Activated naive CD4-positive, alpha-beta T cell treated with anti-CD3 and anti-CD28 coated beads for 36 hours (primary cell): ENCODE measurements at regions of chr5 and their contacts with region 1.

Region 1: GRCh38 chr5:111237470-111237869 is 13.3 kb downstream of the CAMK4 start:
- DNase-seq: no peak
- H3K4me3 Mint-ChIP-seq: peak overlapping the region; percentile 66
- H3K27ac Mint-ChIP-seq: peak overlapping the region; percentile 89
- H3K4me1 Mint-ChIP-seq: peaks cover 90% of the 10 kb centered on the region
- H3K27me3 Mint-ChIP-seq: no peaks in the 10 kb centered on the region

Region 2: GRCh38 chr5:111223889-111224563 is 13.4 kb before region 1 on chr5 and contains the start of gene CAMK4:
- CTCF ChIA-PET with region 1: interaction called, 6 read pairs
- intact Hi-C with region 1: loop called (anchors 1 kb)
- DNase-seq: peak; percentile 75
- H3K4me3 Mint-ChIP-seq: peak within 1 kb of the TSS; percentile 95
- H3K27ac Mint-ChIP-seq: peak within 1 kb of the TSS; percentile 97
- H3K4me1 Mint-ChIP-seq: peaks cover 25% of the 10 kb centered on the region
- H3K27me3 Mint-ChIP-seq: no peaks in the 10 kb centered on the region
- total RNA-seq, gene CAMK4: 40.6 to 44.4 TPM

Region 3: DNA sequence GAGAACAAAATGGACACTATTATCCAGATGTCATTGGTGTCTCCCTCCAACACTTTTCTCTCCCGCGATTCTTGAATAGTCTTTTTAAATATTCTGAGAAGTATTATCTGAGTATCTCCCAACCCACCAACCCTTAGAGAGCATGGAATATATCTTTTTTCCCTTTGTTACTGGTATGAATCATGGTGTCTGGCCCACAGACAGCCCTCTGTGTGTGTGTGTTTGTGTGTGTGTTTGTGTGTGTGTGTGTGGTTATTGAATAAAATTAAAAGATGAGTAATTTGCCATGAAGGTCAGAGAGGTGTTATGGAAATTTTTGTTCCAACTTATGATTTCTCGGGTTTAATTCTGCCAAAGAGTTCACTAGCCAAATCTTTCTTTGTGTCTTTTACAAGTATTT is 34.4 kb after region 1 on chr5:
- CTCF ChIA-PET with region 1: interaction called, 16 read pairs
- intact Hi-C with region 1: loop called (anchors 5 kb)
- DNase-seq: no peak
- H3K4me3 Mint-ChIP-seq: no peak overlapping the region
- H3K27ac Mint-ChIP-seq: peak overlapping the region; percentile 19
- H3K4me1 Mint-ChIP-seq: peaks cover 70% of the 10 kb centered on the region
- H3K27me3 Mint-ChIP-seq: no peaks in the 10 kb centered on the region